PC-9 (cell line): ENCODE measurements at regions of chr12 and their contacts with region 1.

Region 1: DNA sequence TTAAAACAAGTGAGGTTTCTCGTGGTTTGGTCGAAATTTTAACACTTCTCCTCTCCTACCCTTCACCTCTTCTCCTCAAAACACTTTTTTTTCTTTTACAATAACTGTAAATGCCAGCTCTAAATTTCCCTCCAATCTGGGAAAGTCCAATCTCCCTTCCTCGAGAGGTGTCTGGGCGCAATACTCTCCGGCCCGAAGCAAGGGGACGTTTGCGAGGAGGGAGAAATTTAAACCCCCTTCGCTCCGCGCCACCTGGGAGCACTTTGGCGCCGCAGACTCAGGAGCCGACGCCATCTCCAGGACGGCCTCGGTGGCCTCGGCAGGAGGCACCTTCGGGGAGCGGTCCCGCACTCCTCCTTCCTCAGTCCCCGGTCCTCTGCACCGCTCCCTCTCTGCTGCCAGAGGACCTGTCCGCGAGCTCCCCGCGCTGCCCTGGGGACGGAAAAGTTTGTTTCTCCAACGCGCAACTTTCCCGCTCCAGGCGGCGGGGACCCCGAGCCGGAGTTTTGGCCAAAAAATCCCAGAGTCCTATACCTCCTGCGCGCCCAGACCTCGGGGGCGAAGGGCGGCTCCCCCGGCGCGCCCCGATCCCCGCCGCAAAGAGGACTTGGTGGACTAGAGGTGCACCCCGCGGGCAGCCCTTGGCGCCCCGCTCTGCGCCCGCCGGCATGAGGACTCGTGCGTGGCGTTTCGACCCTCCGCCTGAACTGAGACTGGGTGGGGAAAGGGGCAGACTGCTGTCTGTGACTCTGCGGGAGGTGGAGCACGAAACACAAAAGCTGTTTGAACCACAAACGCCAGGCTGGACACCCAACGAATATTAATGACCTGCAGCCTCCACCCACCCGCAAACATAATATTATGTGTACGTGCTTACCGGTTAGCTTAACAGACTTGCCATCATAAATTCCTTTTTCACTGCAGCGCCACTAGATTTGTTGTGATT is 95.2 kb upstream of the HMGA2 start:
- DNase-seq: no peak
- H3K4me3 ChIP-seq: no peak overlapping the region
- H3K27ac ChIP-seq: no peak overlapping the region
- H3K4me1 ChIP-seq: no peaks in the 10 kb centered on the region
- H3K27me3 ChIP-seq: no peaks in the 10 kb centered on the region
- CTCF ChIP-seq: no peak

Region 2: DNA sequence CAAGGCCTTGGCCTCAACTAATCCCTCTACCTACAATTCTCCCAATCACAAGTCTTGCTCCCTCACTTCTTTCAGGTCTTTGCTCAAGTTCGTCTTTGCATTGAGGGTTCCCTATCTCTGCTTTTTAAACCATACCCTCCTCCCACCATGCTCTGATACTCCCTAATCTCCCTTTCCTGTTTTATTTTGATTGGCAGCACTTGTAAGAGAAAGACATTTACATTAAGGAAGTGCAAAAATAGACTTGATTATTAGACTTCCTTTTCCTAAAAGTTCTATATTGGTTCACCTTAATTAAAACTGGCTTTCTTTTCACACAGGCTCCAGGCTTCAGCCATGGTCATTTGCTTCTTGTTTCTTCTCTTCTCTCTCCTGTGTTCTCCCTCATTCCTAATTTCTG is 589.7 kb before region 1 on chr12:
- CTCF ChIA-PET with region 1: no interaction called
- POLR2A ChIA-PET with region 1: no interaction called
- intact Hi-C with region 1: no loop called
- DNase-seq: no peak
- H3K4me3 ChIP-seq: no peak overlapping the region
- H3K27ac ChIP-seq: no peak overlapping the region
- H3K4me1 ChIP-seq: no peaks in the 10 kb centered on the region
- H3K27me3 ChIP-seq: no peaks in the 10 kb centered on the region
- CTCF ChIP-seq: no peak

Region 3: DNA sequence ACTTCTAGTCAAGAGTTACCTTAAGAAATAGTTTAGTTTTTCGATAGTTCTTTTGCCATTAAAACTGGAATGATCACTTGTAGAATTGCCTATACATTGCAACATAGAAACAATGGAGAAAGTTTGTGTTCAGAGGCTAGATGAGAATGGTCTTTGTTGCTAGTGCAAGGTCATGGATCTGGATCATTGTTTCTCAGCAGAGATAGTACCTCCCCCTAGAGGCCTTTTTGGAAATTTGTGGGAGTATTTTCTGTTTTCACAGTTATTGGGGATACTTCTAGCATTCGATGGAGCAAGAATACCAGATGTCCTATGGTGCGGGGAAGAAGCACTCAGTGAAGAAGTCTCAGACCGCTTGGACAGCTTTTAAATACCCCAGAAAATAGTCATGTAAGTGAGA is 43.6 kb before region 1 on chr12:
- CTCF ChIA-PET with region 1: no interaction called
- POLR2A ChIA-PET with region 1: no interaction called
- intact Hi-C with region 1: no loop called
- DNase-seq: peak in 1 of 2 experiments; percentile 45
- H3K4me3 ChIP-seq: no peak overlapping the region
- H3K27ac ChIP-seq: no peak overlapping the region
- H3K4me1 ChIP-seq: no peaks in the 10 kb centered on the region
- H3K27me3 ChIP-seq: no peaks in the 10 kb centered on the region
- CTCF ChIP-seq: peak; percentile 63

Region 4: GRCh38 chr12:65696220-65696619 is 32.9 kb before region 1 on chr12:
- CTCF ChIA-PET with region 1: no interaction called
- POLR2A ChIA-PET with region 1: no interaction called
- intact Hi-C with region 1: no loop called
- DNase-seq: peak in 1 of 2 experiments; percentile 34
- H3K4me3 ChIP-seq: no peak overlapping the region
- H3K27ac ChIP-seq: peak overlapping the region; percentile 24
- H3K4me1 ChIP-seq: peaks cover 25% of the 10 kb centered on the region
- H3K27me3 ChIP-seq: no peaks in the 10 kb centered on the region
- CTCF ChIP-seq: no peak

Region 5: DNA sequence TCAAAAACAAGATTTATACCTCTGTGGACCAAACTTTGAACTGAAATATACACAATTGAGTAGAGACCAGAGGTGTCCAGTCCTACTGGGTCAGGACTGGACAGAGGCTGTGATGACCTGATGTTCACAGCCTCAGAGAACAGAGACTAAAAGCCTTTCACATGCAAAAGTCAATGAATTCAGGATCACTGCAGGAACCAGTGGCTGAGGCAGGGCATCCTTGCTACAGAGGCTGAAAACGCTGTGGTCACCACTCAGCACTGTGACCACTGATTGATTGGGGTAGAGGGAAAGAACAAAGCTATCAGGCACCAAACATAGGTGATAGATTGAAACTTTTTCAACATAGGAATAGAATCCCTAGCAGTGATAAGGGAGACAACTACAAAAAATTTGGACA is 924.7 kb after region 1 on chr12:
- CTCF ChIA-PET with region 1: no interaction called
- POLR2A ChIA-PET with region 1: interaction called, 10 read pairs
- intact Hi-C with region 1: no loop called
- DNase-seq: no peak
- H3K4me3 ChIP-seq: no peak overlapping the region
- H3K27ac ChIP-seq: no peak overlapping the region
- H3K4me1 ChIP-seq: no peaks in the 10 kb centered on the region
- H3K27me3 ChIP-seq: no peaks in the 10 kb centered on the region
- CTCF ChIP-seq: no peak